ENCODE measurements at regions of chr7 and their contacts with region 1.

Region 1: DNA sequence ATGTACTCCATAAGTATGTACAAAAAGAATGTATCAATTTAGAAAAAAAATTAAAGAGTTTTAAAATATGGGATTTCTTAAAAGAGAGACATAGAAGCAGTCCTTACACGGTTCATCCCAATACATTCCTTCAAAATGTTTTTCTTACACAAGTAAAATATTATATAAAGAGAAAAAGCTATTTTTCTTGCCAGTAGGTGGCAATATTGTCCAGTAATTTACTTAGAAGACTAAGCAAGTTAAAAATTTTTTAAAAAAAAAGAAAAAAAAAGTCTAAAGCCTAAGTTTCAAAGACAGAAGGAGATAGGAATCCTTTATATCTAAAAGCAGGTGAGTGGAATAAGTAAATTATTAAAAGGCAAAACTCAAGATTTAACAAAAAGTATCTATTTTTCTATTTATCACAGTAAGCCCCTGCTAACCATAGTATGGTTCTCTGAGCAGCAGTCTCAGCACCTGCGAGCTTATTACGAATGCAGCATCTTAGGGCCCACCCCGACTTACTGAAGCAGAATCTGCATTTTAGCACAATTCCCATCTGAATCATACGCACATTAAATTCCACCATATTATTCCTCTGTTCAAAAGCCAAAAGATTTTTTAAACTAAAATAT is 240.6 kb downstream of the DGKI start:
- DNase-seq: peak; percentile 71
- ATAC-seq: peak; percentile 57; the same call in 1 of the 2 replicates
- H3K4me3 ChIP-seq: no peak overlapping the region
- H3K27ac ChIP-seq: no peak overlapping the region
- H3K4me1 ChIP-seq: no peaks in the 10 kb centered on the region
- H3K27me3 ChIP-seq: no peaks in the 10 kb centered on the region
- CTCF ChIP-seq: peak; percentile 56
- POLR2A ChIP-seq: no peak
- RAD21 ChIP-seq: peak; percentile 55

Region 2: GRCh38 chr7:136114966-136115762 is 1491.0 kb before region 1 on chr7:
- CTCF ChIA-PET with region 1: no interaction called
- POLR2A ChIA-PET with region 1: no interaction called
- dilution Hi-C with region 1: no loop called
- in situ Hi-C with region 1: loop called (anchors 25 kb)
- intact Hi-C with region 1: no loop called
- DNase-seq: peak; percentile 52
- ATAC-seq: peak; percentile 99
- H3K4me3 ChIP-seq: no peak overlapping the region
- H3K27ac ChIP-seq: no peak overlapping the region
- H3K4me1 ChIP-seq: no peaks in the 10 kb centered on the region
- H3K27me3 ChIP-seq: no peaks in the 10 kb centered on the region
- CTCF ChIP-seq: peak; percentile 68
- POLR2A ChIP-seq: no peak
- RAD21 ChIP-seq: peak; percentile 58

Region 3: DNA sequence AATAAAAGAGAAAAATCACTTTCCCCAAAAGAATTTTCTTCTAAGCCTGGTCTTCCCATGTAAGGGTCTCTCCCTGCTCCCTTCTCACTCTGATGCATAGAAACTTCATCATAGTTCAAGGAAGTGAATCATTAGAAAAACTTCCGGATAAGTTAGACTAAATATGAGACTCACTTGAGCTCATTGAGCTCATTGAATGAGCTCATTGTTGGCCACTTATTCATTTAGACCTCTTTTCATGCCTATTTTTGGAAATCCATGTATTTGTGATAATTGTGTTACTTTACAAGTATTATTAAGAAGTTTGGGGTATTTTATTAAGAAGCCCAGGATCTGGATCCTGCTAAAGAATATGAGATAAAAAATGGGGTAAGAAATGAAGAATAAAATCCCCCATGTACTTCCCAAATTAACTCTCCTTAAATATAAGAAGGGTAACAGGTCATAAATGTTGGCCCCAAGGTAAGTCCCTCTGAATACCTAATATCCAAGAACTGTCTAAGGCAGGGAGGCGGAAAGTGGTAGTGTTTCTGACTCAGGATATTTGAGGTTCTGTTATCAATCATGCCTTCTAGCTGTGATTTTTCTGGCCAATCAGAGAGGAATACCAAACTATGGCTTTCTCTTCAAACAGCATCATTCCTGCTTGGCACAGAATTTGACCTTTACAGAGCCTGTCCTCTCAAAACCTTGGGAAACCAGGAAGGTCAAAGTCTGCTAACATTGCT is 26.1 kb before region 1 on chr7:
- CTCF ChIA-PET with region 1: no interaction called
- POLR2A ChIA-PET with region 1: no interaction called
- dilution Hi-C with region 1: no loop called
- in situ Hi-C with region 1: no loop called
- intact Hi-C with region 1: no loop called
- DNase-seq: peak; percentile 95
- ATAC-seq: peak; percentile 90
- H3K4me3 ChIP-seq: no peak overlapping the region
- H3K27ac ChIP-seq: peak overlapping the region; percentile 93
- H3K4me1 ChIP-seq: peaks cover 14% of the 10 kb centered on the region; the same call in 1 of the 2 replicates
- H3K27me3 ChIP-seq: no peaks in the 10 kb centered on the region
- CTCF ChIP-seq: no peak
- POLR2A ChIP-seq: no peak
- RAD21 ChIP-seq: peak; percentile 9; the same call in 1 of the 2 replicates

Region 4: GRCh38 chr7:137626469-137627067 is 20.4 kb after region 1 on chr7:
- CTCF ChIA-PET with region 1: interaction called, 6 read pairs
- POLR2A ChIA-PET with region 1: no interaction called
- dilution Hi-C with region 1: no loop called
- in situ Hi-C with region 1: no loop called
- intact Hi-C with region 1: loop called (anchors 2 kb)
- DNase-seq: peak; percentile 52
- ATAC-seq: peak; percentile 96
- H3K4me3 ChIP-seq: no peak overlapping the region
- H3K27ac ChIP-seq: no peak overlapping the region
- H3K4me1 ChIP-seq: no peaks in the 10 kb centered on the region
- H3K27me3 ChIP-seq: no peaks in the 10 kb centered on the region
- CTCF ChIP-seq: peak; percentile 76
- POLR2A ChIP-seq: no peak
- RAD21 ChIP-seq: peak; percentile 74

Region 5: DNA sequence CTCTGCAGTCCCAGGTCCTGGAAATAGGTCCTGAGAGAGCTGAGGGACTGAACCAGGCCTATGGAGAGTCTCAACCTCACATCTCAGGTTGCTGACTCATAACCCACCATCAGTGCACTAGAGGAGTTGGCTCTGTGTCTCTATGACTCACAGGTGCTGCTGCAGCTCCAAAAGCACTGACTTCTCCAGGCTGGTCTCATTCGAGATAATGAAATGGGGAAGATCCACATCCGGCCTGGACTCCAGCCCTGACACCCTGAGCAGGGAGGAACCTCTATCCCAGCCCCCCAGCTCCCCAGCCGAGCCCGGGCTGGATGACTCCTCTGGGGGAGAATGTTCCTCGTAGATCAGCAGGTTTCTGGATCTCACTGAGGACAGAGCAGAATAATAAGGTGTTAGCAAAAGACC is 276.1 kb after region 1 on chr7:
- CTCF ChIA-PET with region 1: no interaction called
- POLR2A ChIA-PET with region 1: no interaction called
- dilution Hi-C with region 1: no loop called
- in situ Hi-C with region 1: no loop called
- intact Hi-C with region 1: loop called (anchors 5 kb)
- DNase-seq: peak; percentile 100
- ATAC-seq: peak; percentile 85
- H3K4me3 ChIP-seq: no peak overlapping the region
- H3K27ac ChIP-seq: peak overlapping the region; percentile 32
- H3K4me1 ChIP-seq: peaks cover 18% of the 10 kb centered on the region
- H3K27me3 ChIP-seq: no peaks in the 10 kb centered on the region
- CTCF ChIP-seq: no peak
- POLR2A ChIP-seq: peak; percentile 58
- RAD21 ChIP-seq: peak; percentile 35

Region 6: GRCh38 chr7:138002096-138002827 is 396.1 kb after region 1 on chr7:
- CTCF ChIA-PET with region 1: no interaction called
- POLR2A ChIA-PET with region 1: no interaction called
- dilution Hi-C with region 1: loop called (anchors 25 kb)
- in situ Hi-C with region 1: no loop called
- intact Hi-C with region 1: no loop called
- DNase-seq: peak; percentile 100
- ATAC-seq: peak; percentile 90
- H3K4me3 ChIP-seq: peak overlapping the region; percentile 85
- H3K27ac ChIP-seq: no peak overlapping the region; the same call in 1 of the 2 replicates
- H3K4me1 ChIP-seq: peaks cover 6% of the 10 kb centered on the region
- H3K27me3 ChIP-seq: no peaks in the 10 kb centered on the region
- CTCF ChIP-seq: peak; percentile 95
- POLR2A ChIP-seq: no peak
- RAD21 ChIP-seq: peak; percentile 53